H1 (cell line): ENCODE measurements at regions of chr3 and their contacts with region 1.

Region 1: GRCh38 chr3:134308350-134308891 is 57.8 kb upstream of the RYK start:
- DNase-seq: peak in 1 of 2 experiments; percentile 95
- H3K4me3 ChIP-seq: no peak overlapping the region
- H3K27ac ChIP-seq: peak overlapping the region; percentile 70; the same call in 1 of the 2 replicates
- H3K4me1 ChIP-seq: peaks cover 5 to 16% (median 8%) of the 10 kb centered on the region in 4 experiments
- H3K27me3 ChIP-seq: peaks cover 0 to 16% (median 9%) of the 10 kb centered on the region in 4 experiments; a peak in 5 of 7 replicates
- CTCF ChIP-seq: peak; percentile 86 to 99 (median 97)
- EP300 ChIP-seq: no peak
- POLR2A ChIP-seq: no peak
- RAD21 ChIP-seq: peak; percentile 99 to 100

Region 2: GRCh38 chr3:134333522-134334181 is 25.2 kb after region 1 on chr3:
- CTCF ChIA-PET with region 1: interaction called, 31 read pairs
- POLR2A ChIA-PET with region 1: interaction called, 100 read pairs
- DNase-seq: no peak
- H3K4me3 ChIP-seq: no peak overlapping the region
- H3K27ac ChIP-seq: no peak overlapping the region
- H3K4me1 ChIP-seq: peaks cover 6 to 21% (median 13%) of the 10 kb centered on the region in 4 experiments
- H3K27me3 ChIP-seq: no peaks in the 10 kb centered on the region
- CTCF ChIP-seq: peak in 1 of 3 experiments; percentile 5; a peak in 1 of 4 replicates
- EP300 ChIP-seq: no peak
- POLR2A ChIP-seq: no peak
- RAD21 ChIP-seq: no peak; a peak in 1 of 4 replicates

Region 3: GRCh38 chr3:134357261-134358184 is 49.1 kb after region 1 on chr3:
- CTCF ChIA-PET with region 1: interaction called, 70 read pairs
- POLR2A ChIA-PET with region 1: interaction called, 804 read pairs
- DNase-seq: peak in 1 of 2 experiments; percentile 60
- H3K4me3 ChIP-seq: no peak overlapping the region
- H3K27ac ChIP-seq: peak overlapping the region; percentile 23; the same call in 1 of the 2 replicates
- H3K4me1 ChIP-seq: peaks cover 0 to 10% (median 4%) of the 10 kb centered on the region in 4 experiments; a peak in 6 of 7 replicates
- H3K27me3 ChIP-seq: no peaks in the 10 kb centered on the region
- CTCF ChIP-seq: no peak
- EP300 ChIP-seq: no peak
- POLR2A ChIP-seq: peak in 1 of 2 experiments; percentile 15; a peak in 1 of 3 replicates
- RAD21 ChIP-seq: no peak

Region 4: DNA sequence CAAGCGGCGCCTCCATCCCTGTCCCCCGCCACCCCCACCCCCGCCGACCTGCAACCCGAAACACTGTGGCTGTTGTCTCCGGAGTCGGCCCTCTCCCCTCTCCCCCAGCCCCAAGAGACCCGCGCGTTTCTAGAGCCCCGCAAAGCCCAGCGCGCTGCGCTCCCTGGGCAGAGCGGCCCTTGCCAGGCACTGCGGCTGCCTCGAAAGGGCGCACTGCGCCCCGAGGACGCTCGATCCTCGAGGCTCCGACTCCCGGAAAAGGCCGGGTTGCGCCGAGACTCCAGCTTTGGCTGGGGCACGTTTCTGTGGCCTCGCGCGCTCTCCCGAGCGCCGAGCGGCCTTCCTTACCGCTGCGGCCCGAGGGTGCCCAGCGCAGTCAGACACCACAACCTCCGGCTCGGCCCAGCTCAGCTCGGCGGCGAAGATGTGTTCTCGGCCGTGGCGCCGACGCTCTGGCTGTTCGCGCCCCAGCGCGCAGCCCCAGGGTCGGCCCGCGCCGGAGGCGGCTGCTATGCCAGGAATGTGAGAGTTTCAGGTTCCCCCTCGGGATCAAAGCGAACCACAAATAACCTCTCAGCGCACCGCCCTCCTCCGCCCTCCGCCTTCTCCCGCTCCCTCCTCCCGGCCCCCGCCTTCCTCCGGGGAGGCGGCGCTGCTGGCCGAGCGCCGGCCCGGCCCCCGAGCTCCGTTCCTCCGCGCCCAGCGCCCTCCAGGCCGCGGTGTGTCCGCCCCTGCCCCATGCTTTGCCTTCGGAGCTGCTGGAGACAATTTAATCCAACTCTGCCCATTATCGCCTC is 65.8 kb after region 1 on chr3 and contains the start of gene AMOTL2:
- CTCF ChIA-PET with region 1: interaction called, 118 read pairs
- POLR2A ChIA-PET with region 1: interaction called, 804 read pairs
- DNase-seq: peak; percentile 87 to 92
- H3K4me3 ChIP-seq: peak within 1 kb of the TSS; percentile 68 to 96 (median 88)
- H3K27ac ChIP-seq: peak within 1 kb of the TSS; percentile 99
- H3K4me1 ChIP-seq: peaks cover 20 to 44% (median 33%) of the 10 kb centered on the region in 4 experiments
- H3K27me3 ChIP-seq: peaks cover 7 to 32% (median 24%) of the 10 kb centered on the region in 4 experiments
- CTCF ChIP-seq: 0 out of 4 replicates have a peak, but pooled peaks of 1 of the 3 experiments have one; percentile 1
- EP300 ChIP-seq: peak in 1 of 2 experiments; percentile 94; a peak in 1 of 3 replicates
- POLR2A ChIP-seq: peak in 1 of 2 experiments; percentile 100; a peak in 2 of 3 replicates
- RAD21 ChIP-seq: no peak; a peak in 1 of 4 replicates
- total RNA-seq, gene AMOTL2: 60.3 and 63.7 TPM in 2 replicates

Region 5: GRCh38 chr3:134449277-134449676 is 140.9 kb after region 1 on chr3:
- CTCF ChIA-PET with region 1: interaction called, 95 read pairs
- POLR2A ChIA-PET with region 1: interaction called, 3 read pairs
- DNase-seq: peak in 1 of 2 experiments; percentile 59
- H3K4me3 ChIP-seq: no peak overlapping the region
- H3K27ac ChIP-seq: no peak overlapping the region
- H3K4me1 ChIP-seq: peaks cover 0 to 3% (median 2%) of the 10 kb centered on the region in 4 experiments; a peak in 4 of 7 replicates
- H3K27me3 ChIP-seq: peaks cover 0 to 4% (median 0%) of the 10 kb centered on the region in 4 experiments; a peak in 2 of 7 replicates
- CTCF ChIP-seq: peak; percentile 45 to 73 (median 59)
- EP300 ChIP-seq: no peak
- POLR2A ChIP-seq: no peak
- RAD21 ChIP-seq: peak; percentile 62 to 75

Region 6: GRCh38 chr3:134485718-134486576 is 177.5 kb after region 1 on chr3 and contains the starts of genes ANAPC13 and CEP63:
- CTCF ChIA-PET with region 1: interaction called, 138 read pairs
- POLR2A ChIA-PET with region 1: interaction called, 13 read pairs
- DNase-seq: peak; percentile 86 to 95
- H3K4me3 ChIP-seq: peak within 1 kb of the TSS; percentile 68 to 96 (median 80)
- H3K27ac ChIP-seq: peak within 1 kb of the TSS; percentile 83
- H3K4me1 ChIP-seq: peaks cover 0 to 10% (median 7%) of the 10 kb centered on the region in 4 experiments; a peak in 6 of 7 replicates
- H3K27me3 ChIP-seq: no peaks in the 10 kb centered on the region
- CTCF ChIP-seq: no peak
- EP300 ChIP-seq: peak in 1 of 2 experiments; percentile 81; a peak in 2 of 3 replicates
- POLR2A ChIP-seq: peak; percentile 72 to 85
- RAD21 ChIP-seq: no peak
- total RNA-seq, gene ANAPC13: 31.0 and 34.0 TPM in 2 replicates
- total RNA-seq, gene CEP63: 15.5 and 18.2 TPM in 2 replicates